ENCODE measurements at regions of chr11 and their contacts with region 1.

Region 1: GRCh38 chr11:61446211-61446651 is 16.3 kb downstream of the SDHAF2 start:
- DNase-seq: peak; percentile 69 to 88
- H3K4me3 ChIP-seq: no peak overlapping the region
- H3K27ac ChIP-seq: no peak overlapping the region
- H3K4me1 ChIP-seq: peaks cover 0 to 3% (median under 1%) of the 10 kb centered on the region in 4 experiments; a peak in 2 of 7 replicates
- H3K27me3 ChIP-seq: no peaks in the 10 kb centered on the region
- CTCF ChIP-seq: peak; percentile 78 to 97 (median 92)
- EP300 ChIP-seq: no peak
- POLR2A ChIP-seq: no peak
- RAD21 ChIP-seq: peak; percentile 83 to 85

Region 2: GRCh38 chr11:61429691-61430582 is 16.3 kb before region 1 on chr11 and contains the starts of genes CPSF7 and SDHAF2:
- CTCF ChIA-PET with region 1: interaction called, 96 read pairs
- POLR2A ChIA-PET with region 1: interaction called, 20 read pairs
- DNase-seq: peak; percentile 82 to 98
- H3K4me3 ChIP-seq: peak within 1 kb of the TSS; percentile 76 to 94 (median 89)
- H3K27ac ChIP-seq: peak within 1 kb of the TSS; percentile 97
- H3K4me1 ChIP-seq: no peaks in the 10 kb centered on the region; a peak in 1 of 7 replicates
- H3K27me3 ChIP-seq: no peaks in the 10 kb centered on the region
- CTCF ChIP-seq: no peak
- EP300 ChIP-seq: 0 out of 3 replicates have a peak, but pooled peaks of 1 of the 2 experiments have one; percentile 24
- POLR2A ChIP-seq: peak; percentile 78 to 91
- RAD21 ChIP-seq: no peak
- total RNA-seq, gene CPSF7: 95.9 and 96.7 TPM in 2 replicates
- total RNA-seq, gene SDHAF2: 41.0 and 44.8 TPM in 2 replicates

Region 3: DNA sequence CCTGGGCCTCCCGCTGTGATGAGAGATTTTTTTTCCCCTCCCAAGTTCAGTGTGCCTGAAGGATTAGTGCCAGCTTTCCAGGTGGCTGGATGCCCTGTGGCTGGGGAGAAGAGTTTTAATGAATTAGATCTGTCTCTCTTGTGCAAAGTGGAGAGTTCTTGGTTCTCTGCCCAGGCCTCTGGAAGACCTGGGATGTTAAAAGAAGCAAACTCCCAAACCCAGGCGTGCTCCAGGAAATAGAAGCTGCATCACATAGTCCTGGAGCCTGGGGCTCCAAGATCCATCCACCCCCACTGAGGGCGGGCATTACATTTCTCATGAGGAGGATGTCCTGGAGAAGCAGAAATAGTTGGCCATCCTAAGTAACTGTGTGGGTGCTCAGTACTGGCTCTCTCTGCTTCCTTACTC is 14.2 kb after region 1 on chr11:
- CTCF ChIA-PET with region 1: interaction called, 32 read pairs
- POLR2A ChIA-PET with region 1: interaction called, 12 read pairs
- DNase-seq: no peak
- H3K4me3 ChIP-seq: no peak overlapping the region
- H3K27ac ChIP-seq: no peak overlapping the region
- H3K4me1 ChIP-seq: no peaks in the 10 kb centered on the region
- H3K27me3 ChIP-seq: no peaks in the 10 kb centered on the region
- CTCF ChIP-seq: no peak
- EP300 ChIP-seq: no peak
- POLR2A ChIP-seq: no peak
- RAD21 ChIP-seq: no peak

Region 4: DNA sequence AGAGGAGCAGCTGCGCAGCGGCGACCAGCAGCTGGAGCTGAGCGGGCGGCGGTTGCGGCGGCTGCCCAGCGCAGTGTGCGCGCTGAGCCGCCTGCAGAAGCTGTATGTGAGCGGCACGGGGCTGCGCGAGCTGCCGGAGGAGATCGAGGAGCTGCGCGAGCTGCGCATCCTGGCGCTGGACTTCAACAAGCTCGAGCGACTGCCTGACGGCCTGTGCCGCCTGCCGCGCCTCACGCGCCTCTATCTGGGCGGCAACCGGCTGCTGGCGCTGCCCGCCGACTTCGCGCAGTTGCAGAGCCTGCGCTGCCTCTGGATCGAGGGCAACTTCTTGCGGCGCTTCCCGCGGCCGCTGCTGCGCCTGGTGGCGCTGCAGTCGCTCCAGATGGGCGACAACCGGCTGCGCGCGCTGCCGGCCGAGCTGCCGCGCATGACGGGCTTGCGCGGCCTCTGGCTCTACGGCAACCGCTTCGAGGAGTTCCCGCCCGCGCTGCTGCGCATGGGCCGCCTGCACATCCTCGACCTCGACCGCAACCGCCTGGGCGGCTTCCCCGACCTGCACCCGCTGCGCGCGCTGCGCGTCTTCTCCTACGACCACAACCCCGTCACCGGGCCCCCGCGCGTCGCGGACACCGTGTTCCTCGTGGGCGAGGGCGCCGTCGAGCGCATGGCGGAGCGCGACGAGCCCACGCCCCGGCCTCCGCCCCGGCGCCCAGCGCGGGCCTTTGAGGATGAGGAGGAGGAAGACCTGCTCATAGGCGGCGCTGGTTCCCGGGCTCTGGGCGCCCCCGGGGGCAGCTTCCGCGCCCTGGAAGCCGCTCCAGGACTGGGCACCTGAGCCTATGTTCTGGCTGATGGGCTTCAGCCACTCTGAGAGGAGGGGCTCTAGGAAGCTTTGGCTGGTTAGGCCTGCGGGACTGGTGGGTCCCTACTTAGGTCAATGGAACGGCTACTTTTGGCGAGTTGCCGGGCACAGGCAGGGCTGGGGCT is 63.1 kb after region 1 on chr11:
- CTCF ChIA-PET with region 1: interaction called, 2,106 read pairs
- POLR2A ChIA-PET with region 1: interaction called, 4 read pairs
- DNase-seq: peak; percentile 81 to 84
- H3K4me3 ChIP-seq: peak overlapping the region in 3 of 4 experiments; percentile 33 to 54 (median 34); a peak in 6 of 8 replicates
- H3K27ac ChIP-seq: no peak overlapping the region
- H3K4me1 ChIP-seq: peaks cover 4 to 43% (median 34%) of the 10 kb centered on the region in 4 experiments
- H3K27me3 ChIP-seq: peaks cover 13 to 43% (median 40%) of the 10 kb centered on the region in 4 experiments
- CTCF ChIP-seq: peak in 2 of 3 experiments; percentile 69 to 81; a peak in 3 of 4 replicates
- EP300 ChIP-seq: no peak
- POLR2A ChIP-seq: no peak
- RAD21 ChIP-seq: peak; percentile 29 to 58; a peak in 3 of 4 replicates

Region 5: DNA sequence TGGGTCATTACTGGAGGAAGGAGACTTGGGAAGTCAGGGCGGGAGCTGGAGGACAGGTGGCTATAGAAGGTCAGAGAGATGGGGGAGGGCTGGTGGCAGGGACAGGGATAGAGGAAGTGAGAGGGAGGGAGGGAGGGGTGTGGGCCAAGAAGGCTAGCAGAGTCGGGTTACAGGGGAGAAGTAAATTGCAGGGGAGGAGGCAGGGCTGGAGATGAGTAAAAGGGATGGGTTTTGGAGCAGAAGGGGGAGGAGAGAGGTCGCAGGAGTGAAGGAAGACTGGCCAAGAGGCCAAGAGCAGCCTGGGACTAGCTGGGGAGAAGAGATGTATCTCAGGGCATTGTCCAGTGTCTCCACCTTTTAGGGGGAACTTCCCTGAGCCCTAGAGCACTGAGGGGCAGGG is 95.4 kb after region 1 on chr11:
- CTCF ChIA-PET with region 1: interaction called, 2,106 read pairs
- POLR2A ChIA-PET with region 1: interaction called, 3 read pairs
- DNase-seq: no peak
- H3K4me3 ChIP-seq: no peak overlapping the region
- H3K27ac ChIP-seq: no peak overlapping the region
- H3K4me1 ChIP-seq: peaks cover 5 to 35% (median 18%) of the 10 kb centered on the region in 4 experiments
- H3K27me3 ChIP-seq: no peaks in the 10 kb centered on the region; a peak in 1 of 7 replicates
- CTCF ChIP-seq: no peak
- EP300 ChIP-seq: no peak
- POLR2A ChIP-seq: no peak
- RAD21 ChIP-seq: no peak

Region 6: GRCh38 chr11:61645179-61645868 is 199.1 kb after region 1 on chr11:
- CTCF ChIA-PET with region 1: interaction called, 37 read pairs
- POLR2A ChIA-PET with region 1: no interaction called
- DNase-seq: no peak
- H3K4me3 ChIP-seq: no peak overlapping the region
- H3K27ac ChIP-seq: no peak overlapping the region
- H3K4me1 ChIP-seq: peaks cover 0 to 3% (median 0%) of the 10 kb centered on the region in 4 experiments; a peak in 1 of 7 replicates
- H3K27me3 ChIP-seq: no peaks in the 10 kb centered on the region
- CTCF ChIP-seq: no peak
- EP300 ChIP-seq: no peak
- POLR2A ChIP-seq: no peak
- RAD21 ChIP-seq: no peak

Region 7: DNA sequence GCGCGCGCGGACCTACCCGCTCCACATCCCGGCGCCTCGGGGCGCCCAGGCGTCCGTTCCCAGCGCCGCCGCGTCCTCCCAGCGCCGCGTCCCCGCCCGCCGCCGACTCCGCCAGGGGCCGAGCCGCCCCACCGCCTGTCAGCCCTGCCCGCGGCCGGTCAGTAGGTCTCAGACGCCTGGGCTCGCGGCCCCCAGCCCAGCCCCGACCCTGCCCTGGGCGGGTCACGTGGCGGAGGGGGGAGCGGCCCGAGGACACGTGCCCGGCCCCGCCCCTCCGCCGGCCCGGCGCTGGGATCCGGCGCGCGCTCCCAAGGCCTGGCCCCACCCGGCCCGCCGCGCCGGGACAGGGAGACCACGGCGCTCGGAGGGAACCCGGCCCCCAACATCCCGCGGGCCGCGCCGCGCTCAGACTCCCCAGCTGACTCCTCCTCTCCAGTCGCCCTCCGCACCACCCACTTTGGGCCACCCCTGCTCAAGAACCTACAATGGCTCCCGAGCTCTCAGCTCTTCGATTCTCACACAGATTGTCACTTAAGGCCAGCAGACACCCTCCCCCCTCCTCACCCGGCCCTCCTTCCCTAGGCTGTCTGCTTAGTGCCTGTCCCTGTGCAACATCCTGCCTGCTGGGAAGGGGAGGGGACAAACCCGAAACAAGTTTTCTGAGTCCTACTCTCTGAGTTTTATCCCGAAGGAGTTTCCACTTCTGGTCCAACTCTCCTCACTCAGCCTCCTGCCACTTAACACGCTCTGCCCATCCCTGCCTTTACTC is 471.3 kb after region 1 on chr11 and contains the start of gene RAB3IL1:
- CTCF ChIA-PET with region 1: no interaction called
- POLR2A ChIA-PET with region 1: no interaction called
- DNase-seq: peak in 1 of 2 experiments; percentile 81
- H3K4me3 ChIP-seq: peak within 1 kb of the TSS; percentile 32 to 66 (median 44)
- H3K27ac ChIP-seq: no peak within 1 kb of the TSS
- H3K4me1 ChIP-seq: peaks cover 0 to 13% (median 2%) of the 10 kb centered on the region in 4 experiments; a peak in 3 of 7 replicates
- H3K27me3 ChIP-seq: peaks cover 0 to 28% (median 20%) of the 10 kb centered on the region in 4 experiments; a peak in 6 of 7 replicates
- CTCF ChIP-seq: no peak
- EP300 ChIP-seq: no peak
- POLR2A ChIP-seq: no peak
- RAD21 ChIP-seq: no peak
- total RNA-seq, gene RAB3IL1: 5.7 and 6.8 TPM in 2 replicates

Measured in H1 (cell line).